Activated CD4-positive, alpha-beta memory T cell treated with anti-CD3 and anti-CD28 coated beads for 36 hours (primary cell): ENCODE measurements at regions of chr9 and their contacts with region 1.

Region 1: DNA sequence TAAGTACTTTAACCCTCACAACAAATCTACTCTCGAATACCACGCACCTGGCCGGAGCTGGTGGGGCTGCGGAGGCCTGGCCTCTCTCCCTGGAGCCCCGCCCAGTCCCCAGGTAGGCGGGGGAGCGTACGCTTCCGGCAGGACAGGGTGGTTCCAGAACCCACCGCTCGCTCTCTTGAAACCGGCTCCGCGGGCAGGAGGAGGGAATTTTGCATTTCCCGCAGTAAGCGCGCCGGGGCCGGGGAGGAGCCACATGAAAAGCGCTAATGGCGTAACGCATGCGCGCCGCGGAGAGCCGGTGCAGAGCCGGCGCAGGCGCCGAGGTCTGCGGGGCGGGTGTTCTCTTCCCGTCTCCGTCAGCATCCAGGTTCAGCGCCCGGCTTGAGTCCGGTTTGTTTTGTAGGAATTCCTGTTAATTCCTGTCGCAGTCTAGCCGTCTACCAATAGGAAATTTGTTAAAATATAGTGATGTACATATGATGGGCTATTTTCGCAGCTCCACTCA is 20.8 kb downstream of the CAVIN4 start:
- DNase-seq: peak; percentile 86
- H3K4me3 Mint-ChIP-seq: peak overlapping the region; percentile 68
- H3K27ac Mint-ChIP-seq: no peak overlapping the region
- H3K4me1 Mint-ChIP-seq: peaks cover 20% of the 10 kb centered on the region
- H3K27me3 Mint-ChIP-seq: no peaks in the 10 kb centered on the region

Region 2: GRCh38 chr9:100028201-100028784 is 570.4 kb before region 1 on chr9:
- CTCF ChIA-PET with region 1: no interaction called
- POLR2A ChIA-PET with region 1: no interaction called
- intact Hi-C with region 1: loop called (anchors 1 kb)
- DNase-seq: peak; percentile 81
- H3K4me3 Mint-ChIP-seq: no peak overlapping the region
- H3K27ac Mint-ChIP-seq: no peak overlapping the region
- H3K4me1 Mint-ChIP-seq: peaks cover 7% of the 10 kb centered on the region
- H3K27me3 Mint-ChIP-seq: no peaks in the 10 kb centered on the region

Region 3: GRCh38 chr9:100322954-100323536 is 275.6 kb before region 1 on chr9:
- CTCF ChIA-PET with region 1: interaction called, 9 read pairs
- POLR2A ChIA-PET with region 1: no interaction called
- intact Hi-C with region 1: loop called (anchors 10 kb)
- DNase-seq: peak; percentile 24
- H3K4me3 Mint-ChIP-seq: no peak overlapping the region
- H3K27ac Mint-ChIP-seq: no peak overlapping the region
- H3K4me1 Mint-ChIP-seq: peaks cover 10% of the 10 kb centered on the region
- H3K27me3 Mint-ChIP-seq: no peaks in the 10 kb centered on the region

Region 4: DNA sequence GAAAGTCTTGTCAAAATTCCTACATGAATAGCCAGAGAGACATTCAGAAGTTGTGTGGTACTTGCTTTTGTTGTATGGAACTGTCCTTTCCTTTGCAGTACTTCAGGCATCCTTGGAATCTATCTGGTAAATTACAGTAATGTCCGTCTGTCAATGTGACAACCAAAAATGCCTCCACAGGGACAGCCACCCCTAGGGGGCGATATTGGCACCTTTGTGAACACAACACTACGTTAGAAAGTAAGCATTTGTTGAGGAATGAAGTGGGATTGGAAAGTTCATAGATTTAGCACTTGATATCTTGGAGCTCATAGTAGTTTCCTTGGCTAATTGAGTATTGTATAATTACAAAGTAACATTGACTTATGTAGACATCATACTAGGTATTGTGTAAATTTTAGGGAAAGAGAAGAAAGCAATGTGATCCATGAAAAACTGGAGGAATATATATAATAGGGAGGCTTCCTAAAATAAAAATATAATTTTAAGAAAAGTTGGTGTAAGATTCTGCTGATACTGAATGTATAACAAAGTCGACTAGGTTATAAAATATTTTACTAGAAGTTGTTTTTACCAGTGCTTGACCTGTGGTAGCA is 93.0 kb before region 1 on chr9:
- CTCF ChIA-PET with region 1: interaction called, 13 read pairs
- POLR2A ChIA-PET with region 1: no interaction called
- intact Hi-C with region 1: loop called (anchors 1 kb)
- DNase-seq: peak; percentile 78
- H3K4me3 Mint-ChIP-seq: no peak overlapping the region
- H3K27ac Mint-ChIP-seq: no peak overlapping the region
- H3K4me1 Mint-ChIP-seq: no peaks in the 10 kb centered on the region
- H3K27me3 Mint-ChIP-seq: peaks cover 2% of the 10 kb centered on the region

Region 5: GRCh38 chr9:100554935-100555401 is 43.7 kb before region 1 on chr9:
- CTCF ChIA-PET with region 1: no interaction called
- POLR2A ChIA-PET with region 1: no interaction called
- intact Hi-C with region 1: no loop called
- DNase-seq: no peak
- H3K4me3 Mint-ChIP-seq: no peak overlapping the region
- H3K27ac Mint-ChIP-seq: no peak overlapping the region
- H3K4me1 Mint-ChIP-seq: no peaks in the 10 kb centered on the region
- H3K27me3 Mint-ChIP-seq: no peaks in the 10 kb centered on the region

Region 6: DNA sequence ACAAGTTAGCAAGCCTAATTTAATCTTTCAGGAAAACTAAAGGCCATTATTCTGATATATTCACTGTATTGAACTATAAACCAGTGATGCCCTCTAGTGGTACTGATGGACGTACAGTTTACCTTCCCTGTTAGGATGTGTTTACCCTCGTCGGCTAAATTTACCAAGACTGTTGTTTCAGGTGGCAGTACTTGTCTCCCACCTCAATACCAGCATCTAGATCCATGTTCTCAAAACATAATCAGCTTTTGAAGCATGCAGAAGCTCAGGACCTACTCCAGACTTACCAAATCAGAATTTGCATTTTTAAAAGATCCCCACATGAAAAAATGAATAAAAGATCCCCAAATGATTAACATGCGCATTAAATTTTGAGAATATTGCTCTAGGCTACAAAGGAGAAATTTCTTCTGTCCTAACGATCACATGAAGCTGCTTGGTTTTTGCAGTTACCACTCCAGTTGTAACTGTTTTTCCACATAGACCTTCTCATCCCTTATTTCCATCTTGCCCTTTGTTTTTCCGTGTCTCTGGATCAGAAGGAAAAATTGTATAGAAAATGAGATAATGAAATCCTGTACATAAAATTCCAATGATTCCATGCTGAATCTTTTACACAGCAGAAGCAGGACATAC is 789.3 kb after region 1 on chr9:
- CTCF ChIA-PET with region 1: no interaction called
- POLR2A ChIA-PET with region 1: no interaction called
- intact Hi-C with region 1: loop called (anchors 5 kb)
- DNase-seq: no peak
- H3K4me3 Mint-ChIP-seq: no peak overlapping the region
- H3K27ac Mint-ChIP-seq: peak overlapping the region; percentile 65
- H3K4me1 Mint-ChIP-seq: peaks cover 22% of the 10 kb centered on the region
- H3K27me3 Mint-ChIP-seq: no peaks in the 10 kb centered on the region